Activated CD4-positive, alpha-beta T cell treated with anti-CD3 and anti-CD28 coated beads for 36 hours (primary cell): ENCODE measurements at regions of chr17 and their contacts with region 1.

Region 1: DNA sequence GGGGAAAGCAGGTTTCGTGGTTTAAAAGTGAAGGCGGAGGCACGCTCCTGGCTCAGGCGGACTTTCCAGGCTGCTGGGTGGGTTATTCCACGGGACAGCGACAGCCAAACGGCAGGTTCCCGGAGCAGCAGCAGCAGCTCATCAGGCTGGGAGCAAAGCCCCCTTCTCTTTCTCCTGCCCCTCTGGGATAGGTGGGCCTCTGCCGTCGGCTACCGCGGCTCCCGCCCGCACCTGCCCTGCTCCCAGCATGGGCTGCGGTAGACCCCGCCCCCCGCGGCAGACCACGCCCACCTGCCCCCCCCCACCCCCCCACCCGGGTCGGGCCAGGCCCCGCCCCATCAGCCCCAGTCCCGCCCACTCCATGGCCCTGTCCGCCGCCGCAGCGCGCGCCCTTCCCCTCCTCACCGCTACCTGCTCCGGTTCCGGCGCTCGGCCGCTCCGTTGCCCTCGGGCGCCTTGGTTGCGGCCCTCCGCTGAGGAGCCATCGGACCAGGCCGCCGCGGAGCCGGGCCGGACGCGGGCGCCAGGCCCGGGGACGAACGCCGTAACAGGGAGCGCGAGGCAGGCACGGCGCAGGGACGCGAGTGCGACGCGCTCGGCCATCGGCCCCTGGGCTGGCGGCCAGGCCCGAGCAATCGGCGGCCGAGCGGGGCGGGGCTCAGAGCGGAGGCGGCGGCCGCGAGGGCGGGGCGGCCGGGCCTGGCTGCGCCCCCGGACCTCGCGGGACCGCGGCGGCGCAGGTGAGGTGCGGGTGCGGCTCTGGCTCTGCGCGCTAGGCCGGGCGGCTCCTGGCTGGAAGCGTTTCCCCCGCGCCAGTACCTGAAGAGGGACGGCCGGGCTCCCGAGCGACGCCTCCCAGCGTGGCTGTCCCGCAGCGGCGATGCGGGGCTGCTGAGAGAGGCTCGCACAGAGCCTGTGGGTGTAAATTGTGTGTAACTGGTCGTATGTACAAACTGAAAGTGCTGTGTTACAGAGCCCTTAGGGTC is at the starts of genes HEXD and OGFOD3:
- DNase-seq: peak; percentile 91
- ATAC-seq: peak; percentile 88
- H3K4me3 Mint-ChIP-seq: peak within 1 kb of the TSS; percentile 73
- H3K27ac Mint-ChIP-seq: peak within 1 kb of the TSS; percentile 42
- H3K4me1 Mint-ChIP-seq: peaks cover 21% of the 10 kb centered on the region
- H3K27me3 Mint-ChIP-seq: no peaks in the 10 kb centered on the region
- total RNA-seq, gene HEXD: 23.3 to 26.0 TPM
- total RNA-seq, gene OGFOD3: 20.0 to 22.3 TPM

Region 2: GRCh38 chr17:82037113-82037888 is 381.0 kb before region 1 on chr17 and contains the start of gene DCXR:
- CTCF ChIA-PET with region 1: no interaction called
- POLR2A ChIA-PET with region 1: no interaction called
- intact Hi-C with region 1: loop called in 1 of 2 experiments (anchors 1 kb)
- DNase-seq: peak; percentile 97
- ATAC-seq: peak; percentile 97
- H3K4me3 Mint-ChIP-seq: peak within 1 kb of the TSS; percentile 82
- H3K27ac Mint-ChIP-seq: peak within 1 kb of the TSS; percentile 80
- H3K4me1 Mint-ChIP-seq: peaks cover 23% of the 10 kb centered on the region
- H3K27me3 Mint-ChIP-seq: no peaks in the 10 kb centered on the region
- total RNA-seq, gene DCXR: 105 to 166 TPM

Region 3: DNA sequence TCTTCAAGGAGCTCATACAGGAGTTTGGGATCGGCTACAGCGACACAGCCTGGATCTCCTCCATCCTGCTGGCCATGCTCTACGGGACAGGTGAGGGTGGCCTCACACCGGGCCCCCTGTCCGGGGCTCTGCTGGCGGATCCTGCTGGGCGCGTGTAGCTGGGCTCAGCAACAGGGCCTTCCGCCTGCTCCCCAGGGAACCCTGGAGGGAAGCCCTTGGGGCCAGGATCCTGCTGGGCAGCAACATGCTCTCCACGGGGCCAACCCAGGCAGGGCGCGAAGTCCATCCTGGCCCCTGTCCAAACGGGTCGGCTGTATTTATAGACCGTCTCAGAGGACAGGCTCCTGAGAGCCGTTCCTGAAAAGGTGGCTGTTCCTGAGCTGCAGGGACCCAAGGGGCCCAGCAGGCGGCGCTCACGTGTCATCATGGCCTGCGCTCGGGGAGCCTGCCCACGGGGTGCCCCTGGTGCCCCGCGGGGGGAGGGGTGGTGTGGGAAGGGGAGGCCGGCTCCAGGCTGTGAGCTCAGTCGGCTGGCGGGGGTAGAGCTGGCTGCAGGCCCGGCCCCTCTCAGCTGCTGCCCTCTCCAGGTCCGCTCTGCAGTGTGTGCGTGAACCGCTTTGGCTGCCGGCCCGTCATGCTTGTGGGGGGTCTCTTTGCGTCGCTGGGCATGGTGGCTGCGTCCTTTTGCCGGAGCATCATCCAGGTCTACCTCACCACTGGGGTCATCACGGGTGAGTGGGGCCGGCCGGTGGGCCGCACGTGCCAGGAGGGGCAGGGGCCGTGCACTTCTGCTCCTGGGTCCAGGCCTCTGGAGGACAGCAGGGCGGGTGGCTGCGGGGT is 181.9 kb before region 1 on chr17:
- CTCF ChIA-PET with region 1: interaction called, 4 read pairs
- POLR2A ChIA-PET with region 1: no interaction called
- intact Hi-C with region 1: loop called (anchors 1 to 10 kb)
- DNase-seq: peak; percentile 85
- ATAC-seq: peak; percentile 25
- H3K4me3 Mint-ChIP-seq: no peak overlapping the region
- H3K27ac Mint-ChIP-seq: no peak overlapping the region
- H3K4me1 Mint-ChIP-seq: peaks cover 46% of the 10 kb centered on the region
- H3K27me3 Mint-ChIP-seq: no peaks in the 10 kb centered on the region

Region 4: DNA sequence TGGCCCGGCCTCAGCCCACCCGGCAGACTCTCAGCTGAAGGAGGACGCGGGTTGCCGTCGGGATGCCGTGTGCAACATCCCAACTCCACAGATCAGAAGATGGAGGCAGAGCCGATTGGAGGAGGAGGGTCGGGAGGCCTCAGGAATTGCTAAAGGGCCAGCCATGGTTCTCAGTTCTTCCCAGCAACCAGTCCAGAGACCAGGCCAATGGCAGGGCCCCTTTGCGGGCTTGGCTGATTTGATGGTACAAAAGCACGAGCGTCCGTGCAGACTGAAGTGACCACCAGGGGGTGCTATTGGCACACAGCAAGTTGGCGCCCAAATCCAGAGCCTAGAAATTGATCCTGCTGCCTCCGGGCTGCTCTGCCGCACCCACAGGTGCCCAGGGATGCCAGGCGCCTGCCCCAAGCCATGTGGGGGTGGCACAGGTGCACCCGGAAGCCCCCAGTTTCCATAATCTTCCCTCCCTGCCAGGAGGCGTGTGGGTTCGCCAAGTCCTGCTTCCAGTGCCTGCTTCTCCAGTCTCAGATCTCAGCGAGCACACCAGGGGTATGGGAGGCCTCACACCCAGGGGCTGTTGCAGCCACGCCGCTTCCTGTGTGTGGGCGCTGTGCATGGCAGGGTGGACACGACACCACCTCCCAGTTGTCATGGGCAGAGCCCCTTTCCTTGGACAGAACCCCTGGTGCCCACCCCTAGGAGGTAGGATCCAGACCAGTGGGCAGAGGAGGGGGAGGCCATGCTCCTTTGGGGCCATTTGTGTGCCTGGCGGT is 66.4 kb before region 1 on chr17:
- CTCF ChIA-PET with region 1: interaction called, 7 read pairs
- POLR2A ChIA-PET with region 1: no interaction called
- intact Hi-C with region 1: loop called (anchors 1 kb)
- DNase-seq: peak; percentile 92
- ATAC-seq: peak; percentile 92
- H3K4me3 Mint-ChIP-seq: no peak overlapping the region
- H3K27ac Mint-ChIP-seq: no peak overlapping the region
- H3K4me1 Mint-ChIP-seq: no peaks in the 10 kb centered on the region
- H3K27me3 Mint-ChIP-seq: peaks cover 6% of the 10 kb centered on the region

Region 5: GRCh38 chr17:82494236-82495055 is 76.2 kb after region 1 on chr17:
- CTCF ChIA-PET with region 1: no interaction called
- POLR2A ChIA-PET with region 1: interaction called, 3 read pairs
- intact Hi-C with region 1: loop called in 1 of 2 experiments (anchors 1 kb)
- DNase-seq: peak; percentile 93
- ATAC-seq: peak; percentile 80
- H3K4me3 Mint-ChIP-seq: peak overlapping the region; percentile 60
- H3K27ac Mint-ChIP-seq: peak overlapping the region; percentile 76
- H3K4me1 Mint-ChIP-seq: peaks cover 14% of the 10 kb centered on the region
- H3K27me3 Mint-ChIP-seq: no peaks in the 10 kb centered on the region

Region 6: DNA sequence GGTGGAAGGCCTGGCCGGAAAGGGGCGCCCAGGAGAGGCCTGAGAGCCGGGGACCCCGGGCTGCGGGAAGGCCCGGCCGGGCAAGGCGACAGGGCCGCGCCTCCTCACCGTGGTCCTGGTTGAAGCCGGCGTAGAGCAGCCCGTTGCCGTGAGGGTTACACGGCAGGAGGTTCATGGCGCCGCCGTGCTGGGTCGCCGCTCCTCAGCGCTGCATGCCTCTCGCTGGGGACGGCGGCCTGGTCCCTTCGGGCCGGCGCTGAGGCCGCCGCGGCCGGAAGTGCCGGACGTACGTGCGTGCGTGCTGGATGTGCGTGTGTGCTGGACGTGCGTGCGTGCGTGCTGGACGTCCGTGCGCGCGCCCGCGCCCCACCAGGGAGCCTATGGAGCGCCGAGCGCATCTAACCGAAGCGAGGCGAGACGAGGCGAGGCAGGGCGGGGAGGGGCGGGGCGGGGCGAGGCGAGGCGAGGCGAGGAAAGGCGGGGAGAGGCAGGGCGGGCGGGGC is 229.9 kb after region 1 on chr17 and contains the start of gene WDR45B:
- CTCF ChIA-PET with region 1: no interaction called
- POLR2A ChIA-PET with region 1: no interaction called
- intact Hi-C with region 1: loop called in 1 of 2 experiments (anchors 1 kb)
- DNase-seq: peak; percentile 95
- ATAC-seq: peak; percentile 88
- H3K4me3 Mint-ChIP-seq: peak within 1 kb of the TSS; percentile 82
- H3K27ac Mint-ChIP-seq: peak within 1 kb of the TSS; percentile 65
- H3K4me1 Mint-ChIP-seq: peaks cover 24% of the 10 kb centered on the region
- H3K27me3 Mint-ChIP-seq: no peaks in the 10 kb centered on the region
- total RNA-seq, gene WDR45B: 74.1 to 74.8 TPM